Naive thymus-derived CD4-positive, alpha-beta T cell (primary cell): ENCODE measurements at regions of chr12 and their contacts with region 1.

Region 1: GRCh38 chr12:49707128-49707811 is at the start of gene FMNL3:
- DNase-seq: peak; percentile 97 to 100 (median 98)
- ATAC-seq: peak; percentile 97
- H3K4me3 ChIP-seq: peak within 1 kb of the TSS; percentile 78
- H3K4me3 Mint-ChIP-seq: peak within 1 kb of the TSS; percentile 78 to 96 (median 92)
- H3K27ac ChIP-seq: peak within 1 kb of the TSS; percentile 92
- H3K27ac Mint-ChIP-seq: peak within 1 kb of the TSS; percentile 72 to 94 (median 89)
- H3K4me1 ChIP-seq: peaks cover 11 to 32% of the 10 kb centered on the region in 2 donors
- H3K4me1 Mint-ChIP-seq: peaks cover 38 to 49% (median 46%) of the 10 kb centered on the region in 7 donors
- H3K27me3 ChIP-seq: no peaks in the 10 kb centered on the region
- H3K27me3 Mint-ChIP-seq: peaks cover 0 to 29% (median 0%) of the 10 kb centered on the region in 5 donors
- total RNA-seq, gene FMNL3: 33.3 to 40.4 (median 39.7) TPM

Region 2: GRCh38 chr12:49553512-49554088 is 153.7 kb before region 1 on chr12:
- CTCF ChIA-PET with region 1: no interaction called
- POLR2A ChIA-PET with region 1: no interaction called
- intact Hi-C with region 1: loop called in 1 of 2 experiments (anchors 1 kb)
- DNase-seq: peak in 6 of 9 donors; percentile 33 to 61 (median 48)
- ATAC-seq: peak; percentile 68
- H3K4me3 ChIP-seq: no peak overlapping the region
- H3K4me3 Mint-ChIP-seq: no peak overlapping the region
- H3K27ac ChIP-seq: no peak overlapping the region
- H3K27ac Mint-ChIP-seq: peak overlapping the region in 2 of 9 donors; percentile 9 to 24
- H3K4me1 ChIP-seq: peaks cover 0 to 6% of the 10 kb centered on the region in 2 donors
- H3K4me1 Mint-ChIP-seq: peaks cover 5 to 22% (median 8%) of the 10 kb centered on the region in 7 donors
- H3K27me3 ChIP-seq: no peaks in the 10 kb centered on the region
- H3K27me3 Mint-ChIP-seq: peaks cover 0 to 20% (median 0%) of the 10 kb centered on the region in 5 donors

Region 3: DNA sequence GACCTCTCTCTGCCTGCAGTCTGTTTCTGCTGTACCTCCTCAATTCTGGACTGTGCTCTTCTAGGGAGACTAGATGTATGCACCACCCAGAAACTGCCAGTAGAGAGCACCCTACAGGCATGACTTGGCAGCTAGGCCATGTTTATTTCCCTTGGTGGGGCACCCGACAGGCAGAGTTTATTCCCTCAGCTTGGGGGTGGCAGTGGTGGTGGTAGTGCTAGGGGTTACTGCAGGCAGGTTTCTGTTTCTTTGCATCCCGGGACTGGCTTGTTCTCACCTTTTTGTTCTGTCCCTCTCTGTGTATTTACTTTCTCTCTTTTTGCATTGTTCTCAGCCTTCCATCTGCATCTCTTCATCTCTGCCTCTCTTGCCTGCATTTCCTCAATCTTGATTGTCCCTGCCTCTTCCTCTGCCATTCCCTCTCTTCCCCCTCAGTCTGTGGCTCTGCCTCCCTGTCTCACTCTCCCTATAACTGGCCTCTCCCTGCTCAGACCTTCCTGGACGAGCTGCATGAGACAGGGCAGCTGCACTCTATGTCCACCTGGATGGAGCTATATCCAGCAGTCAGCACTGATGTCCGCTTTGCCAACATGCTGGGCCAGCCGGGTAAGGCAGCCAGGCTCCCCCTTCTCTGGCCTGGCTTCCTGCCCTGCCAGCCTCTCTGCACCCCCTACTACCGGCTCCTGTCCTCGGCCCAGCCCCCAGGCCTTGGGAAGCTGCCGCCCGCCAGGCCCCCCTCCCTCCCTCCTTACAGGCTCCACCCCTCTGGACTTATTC is 70.1 kb before region 1 on chr12:
- CTCF ChIA-PET with region 1: interaction called, 229 read pairs
- POLR2A ChIA-PET with region 1: interaction called, 29 read pairs
- intact Hi-C with region 1: loop called (anchors 1 to 2 kb)
- DNase-seq: peak in 8 of 9 donors; percentile 45 to 71 (median 61)
- ATAC-seq: peak; percentile 95
- H3K4me3 ChIP-seq: no peak overlapping the region
- H3K4me3 Mint-ChIP-seq: peak overlapping the region in 1 of 10 donors; percentile 20
- H3K27ac ChIP-seq: peak overlapping the region; percentile 38
- H3K27ac Mint-ChIP-seq: peak overlapping the region; percentile 13 to 90 (median 68)
- H3K4me1 ChIP-seq: peaks cover 6 to 11% of the 10 kb centered on the region in 2 donors
- H3K4me1 Mint-ChIP-seq: peaks cover 10 to 36% (median 26%) of the 10 kb centered on the region in 7 donors
- H3K27me3 ChIP-seq: no peaks in the 10 kb centered on the region
- H3K27me3 Mint-ChIP-seq: no peaks in the 10 kb centered on the region

Region 4: DNA sequence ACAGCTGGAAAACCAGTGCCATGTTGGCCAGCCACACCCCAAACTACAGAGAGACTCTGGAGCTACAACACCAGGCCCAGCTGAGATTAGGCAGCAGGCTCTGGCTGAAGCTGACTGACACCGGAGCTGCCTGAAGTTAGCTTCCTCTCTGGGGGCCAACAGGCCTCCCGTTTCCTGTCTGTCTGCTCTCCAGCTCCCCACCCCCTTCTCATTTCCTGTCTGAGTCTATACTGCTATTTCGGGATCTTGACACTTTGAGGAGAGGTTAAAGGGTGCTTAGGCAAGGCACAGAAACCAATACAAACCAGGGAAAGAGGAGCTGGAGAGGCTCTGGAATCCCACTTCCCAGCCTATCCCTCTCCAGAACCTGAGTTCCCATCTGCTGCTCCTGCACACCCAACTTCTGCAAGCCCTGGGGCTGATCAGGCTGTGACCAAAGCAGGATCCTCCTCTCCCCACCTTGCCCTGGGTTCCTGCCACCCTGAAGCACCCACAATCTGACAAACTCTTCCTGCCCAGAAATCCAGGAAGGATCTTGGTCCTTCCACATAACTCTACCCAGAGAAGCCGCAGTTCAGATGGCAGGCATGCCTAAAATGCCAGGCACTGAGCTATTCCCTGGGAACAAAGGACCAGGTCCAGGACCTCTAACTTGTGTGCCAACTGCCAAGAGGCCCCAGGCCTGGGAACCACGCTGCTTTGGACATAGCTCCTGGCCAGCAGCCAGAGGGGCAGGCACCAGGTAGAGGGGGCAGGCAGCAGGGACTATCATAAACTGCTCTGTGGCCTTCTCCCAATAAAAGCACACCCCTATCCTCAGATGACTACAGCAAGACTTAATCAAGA is 44.0 kb before region 1 on chr12:
- CTCF ChIA-PET with region 1: interaction called, 28 read pairs
- POLR2A ChIA-PET with region 1: interaction called, 131 read pairs
- intact Hi-C with region 1: loop called (anchors 1 kb)
- DNase-seq: peak; percentile 31 to 93 (median 85)
- ATAC-seq: peak; percentile 97
- H3K4me3 ChIP-seq: peak overlapping the region; percentile 56
- H3K4me3 Mint-ChIP-seq: peak overlapping the region; percentile 81 to 94 (median 86)
- H3K27ac ChIP-seq: peak overlapping the region; percentile 77
- H3K27ac Mint-ChIP-seq: peak overlapping the region; percentile 92 to 100 (median 98)
- H3K4me1 ChIP-seq: peaks cover 44 to 76% of the 10 kb centered on the region in 2 donors
- H3K4me1 Mint-ChIP-seq: peaks cover 59 to 96% (median 91%) of the 10 kb centered on the region in 7 donors
- H3K27me3 ChIP-seq: no peaks in the 10 kb centered on the region
- H3K27me3 Mint-ChIP-seq: no peaks in the 10 kb centered on the region

Region 5: DNA sequence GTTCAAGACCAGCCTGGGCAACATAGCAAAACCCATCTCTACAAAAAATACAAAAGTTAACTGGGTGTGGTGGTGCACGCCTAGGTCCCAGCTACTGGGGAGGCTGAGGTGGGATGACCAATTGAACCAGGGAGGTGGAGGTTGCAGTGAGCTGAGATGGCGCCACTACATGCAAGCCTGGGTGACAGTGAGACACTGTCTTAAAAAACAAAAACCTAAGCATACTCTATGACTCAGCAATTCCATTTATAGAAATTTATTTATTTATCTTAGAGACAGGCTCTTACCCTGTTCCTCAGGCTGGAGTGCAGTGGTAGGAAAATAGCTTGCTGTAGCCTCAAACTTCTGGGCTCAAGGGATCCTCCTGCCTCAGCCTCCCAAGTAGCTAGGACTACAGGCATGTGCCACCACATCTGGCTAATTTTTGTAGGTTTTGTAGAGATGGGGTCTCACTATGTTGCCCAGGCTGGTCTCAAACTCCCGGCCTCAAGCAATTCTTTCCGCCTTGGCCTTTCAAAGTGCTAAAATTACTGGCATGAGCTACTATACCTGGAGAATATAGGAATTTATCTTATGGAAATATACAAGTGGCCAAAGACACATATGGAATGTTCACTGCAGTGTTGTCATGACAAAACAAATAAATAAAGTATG is 77.6 kb after region 1 on chr12:
- CTCF ChIA-PET with region 1: no interaction called
- POLR2A ChIA-PET with region 1: no interaction called
- intact Hi-C with region 1: no loop called
- DNase-seq: no peak
- ATAC-seq: no peak
- H3K4me3 ChIP-seq: no peak overlapping the region
- H3K4me3 Mint-ChIP-seq: no peak overlapping the region
- H3K27ac ChIP-seq: no peak overlapping the region
- H3K27ac Mint-ChIP-seq: no peak overlapping the region
- H3K4me1 ChIP-seq: no peaks in the 10 kb centered on the region
- H3K4me1 Mint-ChIP-seq: peaks cover 0 to 7% (median 0%) of the 10 kb centered on the region in 7 donors
- H3K27me3 ChIP-seq: peaks cover 0 to 6% of the 10 kb centered on the region in 2 donors
- H3K27me3 Mint-ChIP-seq: peaks cover 6 to 37% (median 22%) of the 10 kb centered on the region in 5 donors

Region 6: GRCh38 chr12:49828133-49829091 is 121.1 kb after region 1 on chr12 and contains the start of gene NCKAP5L:
- CTCF ChIA-PET with region 1: no interaction called
- POLR2A ChIA-PET with region 1: no interaction called
- intact Hi-C with region 1: loop called in 1 of 2 experiments (anchors 1 kb)
- DNase-seq: peak; percentile 86 to 94 (median 93)
- ATAC-seq: peak; percentile 96
- H3K4me3 ChIP-seq: peak within 1 kb of the TSS; percentile 82
- H3K4me3 Mint-ChIP-seq: peak within 1 kb of the TSS; percentile 88 to 99 (median 96)
- H3K27ac ChIP-seq: peak within 1 kb of the TSS; percentile 79
- H3K27ac Mint-ChIP-seq: peak within 1 kb of the TSS; percentile 89 to 99 (median 95)
- H3K4me1 ChIP-seq: peaks cover 8 to 16% of the 10 kb centered on the region in 2 donors
- H3K4me1 Mint-ChIP-seq: peaks cover 7 to 42% (median 30%) of the 10 kb centered on the region in 7 donors
- H3K27me3 ChIP-seq: no peaks in the 10 kb centered on the region
- H3K27me3 Mint-ChIP-seq: peaks cover 0 to 13% (median 0%) of the 10 kb centered on the region in 5 donors
- total RNA-seq, gene NCKAP5L: 4.3 to 27.5 (median 12.0) TPM

Region 7: DNA sequence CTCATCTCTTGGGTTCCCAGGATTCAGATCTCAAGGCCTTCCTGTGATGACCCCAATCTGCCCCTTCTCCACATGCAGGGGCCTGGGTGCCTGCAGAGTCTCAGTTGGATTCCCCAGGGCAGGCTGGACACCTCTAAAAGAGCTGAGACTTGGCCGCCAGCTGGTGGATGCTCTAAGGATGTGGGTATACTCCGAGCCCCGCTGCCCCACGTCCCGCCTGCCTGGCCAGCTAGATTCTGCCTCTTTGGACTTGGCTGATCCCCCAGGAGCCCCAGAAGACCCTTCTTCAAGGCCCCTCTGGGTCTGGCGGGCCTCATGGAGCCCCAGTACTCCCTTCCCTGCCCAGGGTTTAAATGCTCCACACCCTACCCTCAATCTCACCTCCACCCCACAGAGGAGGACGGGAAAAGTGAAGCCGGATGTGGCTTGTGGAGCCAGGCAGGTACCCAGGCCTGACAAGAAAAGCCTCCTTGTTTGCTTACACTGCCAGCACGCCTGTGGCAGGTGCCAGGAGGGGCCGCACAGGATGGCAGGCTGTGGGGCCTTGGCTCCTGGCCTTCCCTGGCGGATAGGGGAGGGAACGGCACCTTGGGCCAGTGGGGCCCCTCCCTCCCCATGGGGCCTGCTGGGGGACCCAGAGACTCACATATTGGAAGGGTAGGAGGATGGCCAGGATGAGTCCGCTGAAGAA is 181.3 kb after region 1 on chr12:
- CTCF ChIA-PET with region 1: no interaction called
- POLR2A ChIA-PET with region 1: no interaction called
- intact Hi-C with region 1: no loop called
- DNase-seq: no peak
- ATAC-seq: no peak
- H3K4me3 ChIP-seq: no peak overlapping the region
- H3K4me3 Mint-ChIP-seq: no peak overlapping the region
- H3K27ac ChIP-seq: no peak overlapping the region
- H3K27ac Mint-ChIP-seq: no peak overlapping the region
- H3K4me1 ChIP-seq: no peaks in the 10 kb centered on the region
- H3K4me1 Mint-ChIP-seq: peaks cover 0 to 2% (median 0%) of the 10 kb centered on the region in 7 donors
- H3K27me3 ChIP-seq: no peaks in the 10 kb centered on the region
- H3K27me3 Mint-ChIP-seq: peaks cover 0 to 19% (median 11%) of the 10 kb centered on the region in 5 donors